A549 (cell line): ENCODE measurements at regions of chr5 and their contacts with region 1.

Region 1: DNA sequence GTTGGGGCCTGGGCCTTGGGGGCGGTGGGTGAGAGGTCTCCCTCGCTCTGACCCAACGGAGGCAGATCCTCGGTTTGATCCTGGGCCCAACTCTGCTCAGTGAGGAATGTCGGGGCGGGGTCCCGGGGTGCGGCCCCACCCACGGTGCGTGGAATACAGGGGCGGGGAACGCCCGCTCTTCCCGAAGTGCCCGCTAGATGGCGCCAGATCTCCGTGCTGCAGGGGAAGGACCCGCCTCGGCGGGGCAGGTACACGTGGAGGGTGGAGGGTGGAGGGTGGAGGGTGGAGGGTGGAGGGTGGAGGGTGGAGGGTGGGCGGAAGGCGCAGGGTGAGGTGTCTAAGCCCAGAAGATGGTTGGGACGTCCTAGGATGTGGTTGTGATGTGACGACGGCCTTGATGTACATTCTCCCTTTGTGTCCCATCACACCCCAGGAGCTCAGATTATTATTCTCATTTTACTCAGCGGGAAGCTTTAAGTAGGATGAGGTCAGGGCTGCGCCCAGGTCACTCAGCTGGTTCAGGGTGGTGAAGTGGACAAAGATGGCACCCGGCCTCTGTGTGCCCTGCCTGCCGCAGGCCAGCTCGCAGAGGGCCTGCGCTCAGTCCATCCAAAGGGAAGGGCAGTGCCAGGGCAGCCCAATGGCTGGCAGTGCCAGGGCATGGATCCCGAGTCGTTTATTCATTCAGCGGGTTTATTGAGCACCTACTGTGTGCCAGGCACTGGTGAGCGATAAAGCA is 9.4 kb upstream of the RPS14 start:
- DNase-seq: peak; percentile 72 to 81
- ATAC-seq: peak; percentile 88 to 94
- H3K4me3 ChIP-seq: peak overlapping the region; percentile 31; the same call in 2 of the 3 replicates
- H3K27ac ChIP-seq: peak overlapping the region; percentile 79 to 85
- H3K4me1 ChIP-seq: peaks cover 35% of the 10 kb centered on the region
- CTCF ChIP-seq: peak; percentile 86
- EP300 ChIP-seq: no peak
- POLR2A ChIP-seq: no peak
- RAD21 ChIP-seq: peak; percentile 89 to 99

Region 2: GRCh38 chr5:150272526-150272925 is 186.5 kb before region 1 on chr5:
- CTCF ChIA-PET with region 1: no interaction called
- POLR2A ChIA-PET with region 1: no interaction called
- DNase-seq: peak; percentile 57 to 59
- ATAC-seq: peak; percentile 74 to 91
- H3K4me3 ChIP-seq: no peak overlapping the region
- H3K27ac ChIP-seq: peak overlapping the region in 1 of 2 experiments; percentile 51; a peak in 1 of 6 replicates
- H3K4me1 ChIP-seq: peaks cover 10% of the 10 kb centered on the region; the same call in 2 of the 3 replicates
- CTCF ChIP-seq: peak; percentile 54
- EP300 ChIP-seq: no peak
- POLR2A ChIP-seq: no peak
- RAD21 ChIP-seq: peak; percentile 76 to 92

Region 3: GRCh38 chr5:150377964-150378694 is 80.9 kb before region 1 on chr5:
- CTCF ChIA-PET with region 1: no interaction called
- POLR2A ChIA-PET with region 1: no interaction called
- DNase-seq: peak in 1 of 2 experiments; percentile 23
- ATAC-seq: no peak; a peak in 1 of 6 replicates
- H3K4me3 ChIP-seq: no peak overlapping the region
- H3K27ac ChIP-seq: no peak overlapping the region
- H3K4me1 ChIP-seq: peaks cover 3% of the 10 kb centered on the region; the same call in 1 of the 3 replicates
- CTCF ChIP-seq: no peak
- EP300 ChIP-seq: no peak
- POLR2A ChIP-seq: no peak
- RAD21 ChIP-seq: no peak

Region 4: DNA sequence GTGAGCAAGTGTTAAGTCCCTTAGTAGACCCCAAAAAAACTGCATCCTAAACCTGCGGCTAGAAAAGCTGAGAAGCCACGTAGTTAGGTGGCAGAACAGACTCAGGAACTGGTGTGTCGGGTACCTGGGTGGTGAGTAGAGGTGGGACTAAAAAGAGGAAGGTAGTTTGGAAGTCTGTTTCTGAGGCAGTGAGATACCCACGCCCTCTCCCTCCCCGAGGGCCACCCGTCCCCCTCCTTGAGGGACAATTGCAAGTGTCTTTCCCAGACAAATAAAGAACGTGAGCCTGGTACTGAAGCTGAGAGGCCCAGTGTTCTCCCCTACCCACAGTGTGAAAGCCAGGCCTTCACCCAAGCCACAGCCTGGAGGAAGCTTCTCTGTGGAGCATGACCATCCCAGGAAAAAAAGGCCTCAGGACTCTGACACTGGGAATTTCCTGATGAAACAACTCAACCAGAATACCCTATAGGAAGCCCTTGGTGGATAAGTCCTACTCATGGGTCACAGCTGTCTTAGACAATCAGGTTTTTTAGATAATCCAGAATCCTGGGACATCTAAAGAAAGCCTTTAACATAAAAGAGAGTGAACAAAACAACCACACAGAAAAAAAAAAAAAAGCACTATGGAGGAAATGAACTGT is 39.2 kb before region 1 on chr5:
- CTCF ChIA-PET with region 1: no interaction called
- POLR2A ChIA-PET with region 1: no interaction called
- DNase-seq: no peak
- ATAC-seq: peak in 1 of 2 experiments; percentile 39; a peak in 1 of 6 replicates
- H3K4me3 ChIP-seq: no peak overlapping the region
- H3K27ac ChIP-seq: no peak overlapping the region
- H3K4me1 ChIP-seq: no peaks in the 10 kb centered on the region
- CTCF ChIP-seq: no peak
- EP300 ChIP-seq: no peak
- POLR2A ChIP-seq: no peak
- RAD21 ChIP-seq: no peak

Region 5: GRCh38 chr5:150486402-150487198 is 27.6 kb after region 1 on chr5:
- CTCF ChIA-PET with region 1: interaction called, 26 read pairs
- POLR2A ChIA-PET with region 1: interaction called, 9 read pairs
- DNase-seq: peak; percentile 64 to 70
- ATAC-seq: peak; percentile 54 to 62
- H3K4me3 ChIP-seq: peak overlapping the region; percentile 87
- H3K27ac ChIP-seq: peak overlapping the region; percentile 98 to 100
- H3K4me1 ChIP-seq: peaks cover 53% of the 10 kb centered on the region
- CTCF ChIP-seq: no peak
- EP300 ChIP-seq: no peak
- POLR2A ChIP-seq: no peak
- RAD21 ChIP-seq: no peak; a peak in 1 of 5 replicates

Region 6: GRCh38 chr5:150503977-150504620 is 45.1 kb after region 1 on chr5:
- CTCF ChIA-PET with region 1: interaction called, 19 read pairs
- POLR2A ChIA-PET with region 1: no interaction called
- DNase-seq: no peak
- ATAC-seq: 0 out of 6 replicates have a peak, but pooled peaks of 1 of the 2 experiments have one; percentile 6
- H3K4me3 ChIP-seq: no peak overlapping the region
- H3K27ac ChIP-seq: peak overlapping the region in 1 of 2 experiments; percentile 57; a peak in 3 of 6 replicates
- H3K4me1 ChIP-seq: peaks cover 84% of the 10 kb centered on the region
- CTCF ChIP-seq: no peak
- EP300 ChIP-seq: no peak
- POLR2A ChIP-seq: no peak
- RAD21 ChIP-seq: no peak

Region 7: DNA sequence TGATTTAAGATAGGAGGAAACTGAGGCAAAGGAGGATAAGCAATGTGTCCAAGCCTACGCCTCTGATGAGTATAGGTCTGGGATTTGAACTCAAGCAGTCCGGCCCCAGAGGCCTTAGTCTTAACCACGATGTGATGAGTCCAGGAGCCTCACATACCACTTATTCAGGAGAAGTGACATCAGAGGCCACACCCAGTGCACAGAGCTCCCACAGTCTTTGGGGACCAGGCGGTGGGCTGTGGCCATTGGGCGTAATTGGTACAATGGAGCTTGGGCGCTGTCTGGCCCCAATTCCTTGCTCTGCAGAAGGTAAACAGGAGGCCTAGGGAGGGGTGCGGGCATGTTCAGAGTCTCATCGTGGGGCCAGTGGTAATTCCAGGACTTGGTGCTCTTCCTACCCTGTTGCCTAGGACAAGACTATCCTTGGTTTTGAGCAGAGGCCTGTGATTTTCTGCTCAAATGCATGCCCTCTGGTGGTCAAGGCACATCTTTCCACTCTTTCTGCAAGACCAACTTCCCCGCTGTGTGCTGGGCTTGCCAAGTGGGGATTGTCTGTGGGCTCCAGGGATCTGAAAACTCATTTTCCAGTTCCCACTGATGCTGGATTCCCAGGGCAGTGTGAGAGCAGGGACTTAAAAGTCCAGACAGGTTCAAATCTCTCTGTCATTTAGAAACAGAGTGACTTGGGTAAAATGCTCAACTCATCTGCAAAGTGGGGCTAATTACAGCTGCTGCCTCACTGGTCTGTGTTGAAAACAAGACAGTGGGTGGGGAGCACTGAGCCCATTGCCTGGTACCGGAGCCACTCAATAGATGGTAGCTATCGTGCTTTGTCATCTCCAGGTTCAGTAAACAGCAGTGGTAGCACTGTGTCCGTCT is 64.7 kb after region 1 on chr5:
- CTCF ChIA-PET with region 1: interaction called, 211 read pairs
- POLR2A ChIA-PET with region 1: no interaction called
- DNase-seq: peak; percentile 75 to 87
- ATAC-seq: peak; percentile 81 to 87
- H3K4me3 ChIP-seq: no peak overlapping the region
- H3K27ac ChIP-seq: peak overlapping the region; percentile 52 to 92; a peak in 5 of 6 replicates
- H3K4me1 ChIP-seq: peaks cover 59% of the 10 kb centered on the region
- CTCF ChIP-seq: peak; percentile 75
- EP300 ChIP-seq: no peak
- POLR2A ChIP-seq: no peak
- RAD21 ChIP-seq: peak; percentile 74 to 82

Region 8: GRCh38 chr5:150560401-150561193 is 101.6 kb after region 1 on chr5:
- CTCF ChIA-PET with region 1: interaction called, 44 read pairs
- POLR2A ChIA-PET with region 1: no interaction called
- DNase-seq: peak; percentile 83 to 92
- ATAC-seq: peak; percentile 72 to 85
- H3K4me3 ChIP-seq: no peak overlapping the region
- H3K27ac ChIP-seq: peak overlapping the region; percentile 66 to 80
- H3K4me1 ChIP-seq: peaks cover 19% of the 10 kb centered on the region
- CTCF ChIP-seq: peak; percentile 93
- EP300 ChIP-seq: no peak
- POLR2A ChIP-seq: no peak
- RAD21 ChIP-seq: peak; percentile 94 to 95

Region 9: DNA sequence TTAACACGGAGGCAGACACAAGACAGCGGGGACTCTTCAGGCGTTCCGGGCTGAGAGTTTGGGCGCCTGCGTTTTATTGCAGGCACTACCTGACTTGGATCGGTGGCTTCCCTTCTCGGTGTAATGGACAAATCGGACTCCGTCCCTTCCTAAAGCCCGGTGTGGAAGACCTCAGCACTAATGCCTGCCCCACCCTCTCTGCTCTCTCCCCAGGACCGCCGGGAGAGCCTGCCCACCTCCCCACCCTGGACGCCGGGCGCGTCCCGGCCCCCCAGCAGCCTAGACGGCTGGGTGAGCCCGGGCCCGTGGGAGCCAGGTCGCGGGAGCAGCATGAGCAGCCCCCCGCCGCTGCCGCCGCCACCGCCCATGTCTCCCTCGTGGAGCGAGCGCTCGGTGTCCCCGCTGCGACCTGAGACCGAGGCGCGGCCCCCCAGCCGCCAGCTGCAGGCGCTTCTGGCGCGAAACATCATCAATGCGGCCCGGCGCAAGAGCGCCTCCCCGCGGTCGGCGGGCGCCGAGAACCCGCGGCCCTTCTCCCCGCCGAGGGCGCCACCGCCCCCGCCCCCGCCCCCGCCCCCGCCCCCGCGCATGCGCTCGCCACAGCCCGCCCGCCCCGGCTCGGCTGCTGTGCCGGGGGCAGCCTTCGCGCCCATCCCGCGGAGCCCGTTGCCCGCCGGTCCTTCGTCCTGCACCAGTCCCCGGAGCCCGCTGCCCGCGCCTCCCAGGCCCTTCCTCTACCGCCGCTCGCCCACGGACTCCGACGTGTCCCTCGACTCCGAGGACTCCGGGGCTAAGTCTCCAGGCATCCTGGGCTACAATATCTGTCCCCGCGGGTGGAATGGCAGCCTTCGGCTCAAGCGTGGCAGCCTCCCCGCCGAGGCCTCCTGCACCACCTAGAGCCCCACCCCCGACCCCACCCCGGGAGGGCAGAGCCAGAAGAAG is 197.5 kb after region 1 on chr5:
- CTCF ChIA-PET with region 1: interaction called, 18 read pairs
- POLR2A ChIA-PET with region 1: no interaction called
- DNase-seq: peak; percentile 60 to 81
- ATAC-seq: peak; percentile 48 to 66
- H3K4me3 ChIP-seq: peak overlapping the region; percentile 50
- H3K27ac ChIP-seq: peak overlapping the region; percentile 83 to 96
- H3K4me1 ChIP-seq: peaks cover 43% of the 10 kb centered on the region
- CTCF ChIP-seq: peak; percentile 90
- EP300 ChIP-seq: no peak
- POLR2A ChIP-seq: peak; percentile 50
- RAD21 ChIP-seq: peak; percentile 71 to 98